ENCODE measurements at regions of chr9 and their contacts with region 1.

Region 1: GRCh38 chr9:25716220-25716872 is 38.1 kb upstream of the TUSC1 start:
- DNase-seq: peak; percentile 62
- H3K4me3 ChIP-seq: no peak overlapping the region
- H3K27ac ChIP-seq: no peak overlapping the region
- H3K4me1 ChIP-seq: peaks cover 0 to 8% of the 10 kb centered on the region in 2 experiments; a peak in 1 of 4 replicates
- H3K27me3 ChIP-seq: no peaks in the 10 kb centered on the region
- CTCF ChIP-seq: peak; percentile 69
- EP300 ChIP-seq: no peak
- RAD21 ChIP-seq: peak; percentile 66

Region 2: DNA sequence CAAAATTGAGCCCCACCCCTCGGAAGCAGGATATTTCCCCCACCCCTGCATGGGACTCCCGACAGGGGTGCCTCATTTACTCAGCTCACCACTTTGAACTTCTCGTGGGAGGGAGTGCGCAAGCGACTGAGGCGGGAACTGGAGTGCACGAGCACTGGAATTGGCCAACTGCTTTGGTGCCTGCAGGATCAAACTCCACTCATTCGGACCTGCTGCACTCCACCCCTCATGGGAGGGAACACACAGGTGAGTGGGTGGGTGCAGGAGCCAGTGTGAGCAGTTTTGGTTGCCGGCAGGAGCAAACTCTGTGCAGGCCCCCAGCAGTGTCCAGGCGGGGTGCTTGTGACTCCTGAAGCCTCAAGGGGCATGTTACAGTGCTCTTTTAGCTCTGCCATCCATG is 339.3 kb before region 1 on chr9:
- CTCF ChIA-PET with region 1: no interaction called
- POLR2A ChIA-PET with region 1: no interaction called
- DNase-seq: no peak
- H3K4me3 ChIP-seq: no peak overlapping the region
- H3K27ac ChIP-seq: no peak overlapping the region
- H3K4me1 ChIP-seq: peaks cover 0 to 7% of the 10 kb centered on the region in 2 experiments; a peak in 2 of 4 replicates
- H3K27me3 ChIP-seq: no peaks in the 10 kb centered on the region
- CTCF ChIP-seq: no peak
- EP300 ChIP-seq: no peak
- RAD21 ChIP-seq: no peak

Region 3: GRCh38 chr9:25726871-25727410 is 10.6 kb after region 1 on chr9:
- CTCF ChIA-PET with region 1: interaction called, 12 read pairs
- POLR2A ChIA-PET with region 1: no interaction called
- DNase-seq: no peak
- H3K4me3 ChIP-seq: no peak overlapping the region
- H3K27ac ChIP-seq: no peak overlapping the region
- H3K4me1 ChIP-seq: no peaks in the 10 kb centered on the region
- H3K27me3 ChIP-seq: no peaks in the 10 kb centered on the region
- CTCF ChIP-seq: no peak
- EP300 ChIP-seq: no peak
- RAD21 ChIP-seq: no peak

Measured in SK-N-SH (cell line).